ENCODE measurements at regions of chr2 and their contacts with region 1.

Region 1: DNA sequence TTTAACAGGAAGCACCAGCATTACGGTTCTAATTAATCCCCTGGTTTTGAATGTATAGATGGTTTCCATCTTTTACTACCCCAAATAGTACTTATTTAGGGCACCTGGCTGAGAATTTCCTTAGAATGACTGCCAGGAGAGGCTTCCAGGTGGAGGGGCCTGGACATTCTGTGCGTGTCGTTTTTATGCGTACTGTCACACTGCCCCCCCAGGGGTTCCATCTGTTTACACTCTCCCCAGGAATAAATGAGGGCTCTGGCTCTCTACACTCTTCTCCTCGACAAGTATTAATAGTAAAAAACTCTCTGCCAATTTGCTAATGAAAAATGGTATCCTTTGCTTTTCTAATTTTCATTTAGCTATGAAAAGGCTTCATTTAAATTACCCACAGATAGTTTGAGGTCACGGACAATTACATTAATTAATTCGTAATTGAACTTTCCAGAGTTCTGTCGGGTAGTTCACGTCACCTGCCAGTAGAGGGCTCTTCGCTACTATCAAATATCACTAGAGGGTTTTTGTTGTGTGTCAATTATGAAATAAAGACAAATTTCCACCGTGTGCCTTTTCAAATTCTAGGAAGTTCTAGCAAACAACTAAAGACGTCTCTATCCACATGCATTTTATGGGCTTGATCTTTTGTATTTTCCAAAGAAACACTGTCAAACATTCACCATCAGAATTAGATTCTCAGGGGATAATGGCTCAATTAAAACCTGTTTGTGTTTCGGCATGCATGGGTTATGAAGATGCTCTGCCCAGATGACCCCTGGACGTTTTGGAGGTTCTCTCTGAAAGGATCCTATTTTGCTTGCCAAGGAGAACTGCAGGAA is 88.8 kb upstream of the ASB18 start:
- DNase-seq: no peak
- ATAC-seq: no peak

Region 2: GRCh38 chr2:236569573-236569973 is 216.6 kb after region 1 on chr2 and contains the start of gene ACKR3:
- intact Hi-C with region 1: loop called in 1 of 2 experiments (anchors 10 kb)
- DNase-seq: peak; percentile 56 to 72
- ATAC-seq: peak; percentile 74
- total RNA-seq, gene ACKR3: 8.5 to 11.3 TPM

Region 3: DNA sequence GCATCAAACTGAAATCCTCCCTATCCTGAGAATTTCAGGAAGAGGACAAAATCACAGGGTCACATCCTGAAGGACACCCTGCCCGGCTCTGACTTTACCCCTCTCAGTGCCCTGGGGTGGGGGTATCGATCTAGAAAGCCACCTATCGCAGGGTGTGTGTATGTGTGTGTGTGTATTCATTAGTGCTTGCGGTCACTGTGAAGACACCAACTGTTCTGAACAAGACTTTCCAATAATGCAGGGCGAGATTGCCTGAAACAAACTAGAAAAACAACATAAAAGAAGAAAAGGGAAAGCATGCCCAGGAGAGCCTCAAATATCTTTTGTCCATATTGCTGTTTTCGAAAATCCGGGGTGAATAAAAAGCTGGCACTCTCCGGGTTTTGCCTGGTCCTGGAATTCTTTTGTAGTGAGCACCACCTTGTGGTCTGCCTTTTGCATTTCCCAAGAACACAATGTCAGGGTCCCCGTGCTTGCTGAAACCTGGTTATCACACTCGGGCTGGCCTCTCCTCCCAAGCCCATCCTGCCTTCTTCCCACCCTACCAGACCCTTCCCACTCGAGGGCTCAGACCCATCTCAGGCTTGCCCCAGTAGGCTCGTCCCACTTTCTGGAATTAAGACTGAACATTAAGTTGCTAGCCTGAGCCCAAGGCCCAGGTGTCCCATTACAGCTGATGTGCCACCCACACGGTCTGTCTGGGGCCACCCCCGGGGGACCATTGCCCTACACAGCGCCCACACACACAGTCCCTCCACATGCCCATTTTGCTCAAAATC is 707.7 kb after region 1 on chr2:
- intact Hi-C with region 1: loop called in 1 of 2 experiments (anchors 10 kb)
- DNase-seq: peak in 1 of 2 donors; percentile 28
- ATAC-seq: peak; percentile 62

Region 4: DNA sequence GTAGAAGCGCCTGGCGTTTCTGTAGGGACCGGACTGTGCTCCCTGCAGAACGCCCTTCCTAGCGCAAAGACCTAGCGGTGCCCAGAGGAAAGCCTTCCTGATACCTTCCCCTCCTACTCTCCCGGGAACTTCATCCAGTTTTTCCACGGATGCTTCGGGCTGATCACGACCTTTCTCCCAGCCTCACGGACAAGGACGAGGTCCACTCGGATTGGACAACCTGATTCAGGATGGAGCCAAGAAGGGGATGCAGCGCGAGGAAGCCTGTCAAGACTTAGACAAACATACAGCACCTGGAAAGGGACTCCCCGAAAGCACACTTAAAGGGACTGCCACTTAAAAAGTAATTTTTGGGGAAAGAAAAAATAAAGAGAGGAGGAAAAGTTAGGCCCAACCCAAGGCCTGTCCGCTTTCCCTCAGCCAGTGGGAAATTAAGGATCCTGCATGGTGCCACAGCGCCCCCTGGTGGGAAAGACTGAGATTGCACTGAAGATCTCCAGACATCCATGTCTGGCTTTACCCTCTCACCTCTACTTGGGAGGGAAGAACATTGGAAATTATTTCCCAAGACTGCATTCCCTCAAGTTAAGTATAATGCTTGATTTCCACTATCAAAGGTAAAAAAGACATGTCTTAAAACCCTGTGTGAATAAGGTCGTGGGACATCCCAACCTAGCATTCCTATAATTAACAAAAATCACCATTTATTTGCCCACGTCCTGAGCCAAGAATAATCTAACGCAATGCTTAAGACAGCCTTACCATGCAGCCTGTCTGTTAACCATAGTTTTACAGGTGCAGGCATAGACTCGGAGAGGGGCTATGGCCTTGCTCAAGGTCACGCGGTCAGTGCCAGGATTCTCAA is 719.3 kb after region 1 on chr2:
- intact Hi-C with region 1: loop called (anchors 5 to 10 kb)
- DNase-seq: peak in 1 of 2 donors; percentile 83
- ATAC-seq: peak; percentile 64

Region 5: GRCh38 chr2:237700512-237701032 is 1347.6 kb after region 1 on chr2:
- intact Hi-C with region 1: no loop called
- DNase-seq: peak in 1 of 2 donors; percentile 66
- ATAC-seq: no peak

Measured in left colon (tissue), 2 donors.